ENCODE measurements at regions of chr16 and their contacts with region 1.

Region 1: GRCh38 chr16:75506567-75506966 is 11.3 kb upstream of the CHST6 start:
- DNase-seq: no peak
- ATAC-seq: no peak
- H3K4me3 ChIP-seq: no peak overlapping the region
- H3K27ac ChIP-seq: no peak overlapping the region
- H3K4me1 ChIP-seq: no peaks in the 10 kb centered on the region
- H3K27me3 ChIP-seq: no peaks in the 10 kb centered on the region
- CTCF ChIP-seq: no peak
- EP300 ChIP-seq: no peak
- POLR2A ChIP-seq: no peak
- RAD21 ChIP-seq: no peak

Region 2: DNA sequence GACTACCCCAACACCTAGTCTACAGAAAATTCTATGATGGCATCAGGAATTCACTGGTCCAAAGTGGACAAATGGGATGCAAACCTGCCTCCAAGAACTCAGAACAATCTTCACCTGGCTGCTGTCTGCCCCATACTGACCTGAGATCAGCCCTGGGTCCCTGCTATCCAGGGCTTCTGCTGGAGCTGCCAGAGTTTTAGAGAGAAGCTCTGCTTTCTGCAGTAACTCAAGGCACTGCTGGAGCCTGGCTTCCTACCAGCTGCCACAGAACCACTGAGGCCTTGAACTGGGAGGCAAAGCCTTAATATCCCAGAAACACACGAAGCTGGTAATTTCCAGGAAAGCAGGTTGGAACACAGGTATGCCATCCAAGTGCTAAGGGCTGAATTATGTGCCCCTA is 49.6 kb before region 1 on chr16:
- CTCF ChIA-PET with region 1: no interaction called
- POLR2A ChIA-PET with region 1: no interaction called
- RAD21 ChIA-PET with region 1: no interaction called
- SMC1A ChIA-PET with region 1: no interaction called
- in situ Hi-C with region 1: loop called (anchors 5 kb)
- intact Hi-C with region 1: no loop called
- DNase-seq: no peak
- ATAC-seq: no peak
- H3K4me3 ChIP-seq: no peak overlapping the region
- H3K27ac ChIP-seq: no peak overlapping the region
- H3K4me1 ChIP-seq: peaks cover under 1% of the 10 kb centered on the region
- H3K27me3 ChIP-seq: no peaks in the 10 kb centered on the region
- CTCF ChIP-seq: no peak
- EP300 ChIP-seq: no peak
- POLR2A ChIP-seq: no peak
- RAD21 ChIP-seq: no peak